Psoas muscle (tissue), 8 donors: ENCODE measurements at regions of chr4 and their contacts with region 1.

Region 1: DNA sequence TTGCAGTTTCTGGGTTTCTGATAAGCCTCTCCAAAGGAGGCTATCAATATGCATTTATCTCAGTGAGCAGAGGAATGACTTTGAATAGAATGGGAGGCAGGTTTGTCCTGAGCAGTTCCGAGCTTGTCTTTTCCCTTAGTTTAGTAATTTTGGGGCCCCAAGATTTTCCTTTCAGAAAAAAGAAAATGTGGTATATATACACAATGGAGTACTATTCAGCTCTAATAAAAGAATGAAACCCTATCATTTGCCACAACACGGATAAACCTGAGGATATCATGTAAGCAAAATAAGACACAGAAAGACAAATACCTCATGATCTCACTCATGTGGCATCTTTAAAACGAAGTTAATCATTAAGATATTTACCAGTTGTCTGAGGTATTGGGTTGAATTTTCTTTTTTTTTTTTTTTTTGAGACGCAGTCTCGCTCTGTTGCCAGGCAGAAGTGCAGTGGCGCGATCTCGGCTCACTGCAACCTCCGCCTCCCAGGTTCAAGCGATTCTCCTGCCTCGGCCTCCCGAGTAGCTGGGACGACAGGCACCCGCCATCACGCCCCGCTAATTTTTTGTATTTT is 540 bp downstream of the ZNF721 start:
- DNase-seq: no peak
- ATAC-seq: peak; percentile 18 to 55 (median 22)
- H3K4me3 ChIP-seq: peak overlapping the region; percentile 100
- H3K27ac ChIP-seq: peak overlapping the region; percentile 97
- H3K4me1 ChIP-seq: peaks cover 9% of the 10 kb centered on the region
- H3K27me3 ChIP-seq: no peaks in the 10 kb centered on the region
- CTCF ChIP-seq: no peak

Region 2: DNA sequence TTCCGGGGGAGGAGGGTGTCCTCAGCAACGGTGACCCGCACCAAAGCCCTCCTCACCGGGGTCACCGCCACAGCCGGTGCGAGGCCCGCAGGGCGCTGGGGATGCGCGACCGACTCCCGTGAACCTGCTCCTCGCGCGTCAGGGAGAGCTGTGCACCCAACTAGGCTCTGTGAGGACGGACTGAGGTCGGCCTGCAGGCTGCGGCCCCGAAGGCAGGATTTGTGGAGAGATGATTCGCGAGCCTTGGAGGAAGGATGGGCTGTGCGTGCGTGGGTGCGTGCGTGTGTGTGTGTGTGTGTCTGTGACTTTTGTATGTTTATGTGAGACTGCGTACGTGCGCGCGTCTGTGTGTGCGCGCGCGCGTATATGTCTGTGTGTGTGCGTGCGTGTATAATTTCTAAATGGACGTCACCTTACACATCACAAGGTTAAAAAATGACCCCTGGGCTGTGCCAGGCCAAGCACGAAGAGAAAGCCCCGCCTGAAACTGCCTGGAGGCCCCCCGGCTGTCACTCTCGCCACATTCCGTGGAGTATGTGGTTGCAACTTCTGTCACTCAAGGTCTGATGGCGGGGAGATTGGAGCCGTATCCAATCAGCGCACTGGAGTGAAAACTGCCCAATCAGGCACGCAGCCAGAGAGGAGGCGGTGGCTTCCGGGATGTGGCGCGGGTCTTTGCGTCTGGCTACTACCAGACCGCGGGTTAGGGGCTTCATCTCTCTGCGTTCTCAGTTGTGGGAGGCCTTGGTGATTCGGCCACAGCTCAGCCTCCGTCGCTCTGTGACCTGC is 161.1 kb before region 1 on chr4 and contains the start of gene ZNF141:
- intact Hi-C with region 1: no loop called
- DNase-seq: peak; percentile 95
- ATAC-seq: peak; percentile 98 to 99 (median 98)
- H3K4me3 ChIP-seq: peak within 1 kb of the TSS; percentile 77
- H3K27ac ChIP-seq: peak within 1 kb of the TSS; percentile 75
- H3K4me1 ChIP-seq: peaks cover 9% of the 10 kb centered on the region
- H3K27me3 ChIP-seq: no peaks in the 10 kb centered on the region
- CTCF ChIP-seq: no peak
- total RNA-seq, gene ZNF141: 2.9 to 4.8 (median 3.4) TPM

Region 3: GRCh38 chr4:473570-474457 is 24.6 kb before region 1 on chr4:
- intact Hi-C with region 1: loop called in 1 of 2 experiments (anchors 2 kb)
- DNase-seq: peak; percentile 93 to 95
- ATAC-seq: peak; percentile 99 to 100 (median 100)
- H3K4me3 ChIP-seq: peak overlapping the region; percentile 96
- H3K27ac ChIP-seq: peak overlapping the region; percentile 92
- H3K4me1 ChIP-seq: peaks cover 6% of the 10 kb centered on the region
- H3K27me3 ChIP-seq: no peaks in the 10 kb centered on the region
- CTCF ChIP-seq: no peak

Region 4: GRCh38 chr4:602559-602942 is 104.1 kb after region 1 on chr4:
- intact Hi-C with region 1: no loop called
- DNase-seq: no peak
- ATAC-seq: no peak
- H3K4me3 ChIP-seq: no peak overlapping the region
- H3K27ac ChIP-seq: no peak overlapping the region
- H3K4me1 ChIP-seq: no peaks in the 10 kb centered on the region
- H3K27me3 ChIP-seq: peaks cover 0 to 8% (median 2%) of the 10 kb centered on the region in 3 donors
- CTCF ChIP-seq: peak; percentile 13

Region 5: DNA sequence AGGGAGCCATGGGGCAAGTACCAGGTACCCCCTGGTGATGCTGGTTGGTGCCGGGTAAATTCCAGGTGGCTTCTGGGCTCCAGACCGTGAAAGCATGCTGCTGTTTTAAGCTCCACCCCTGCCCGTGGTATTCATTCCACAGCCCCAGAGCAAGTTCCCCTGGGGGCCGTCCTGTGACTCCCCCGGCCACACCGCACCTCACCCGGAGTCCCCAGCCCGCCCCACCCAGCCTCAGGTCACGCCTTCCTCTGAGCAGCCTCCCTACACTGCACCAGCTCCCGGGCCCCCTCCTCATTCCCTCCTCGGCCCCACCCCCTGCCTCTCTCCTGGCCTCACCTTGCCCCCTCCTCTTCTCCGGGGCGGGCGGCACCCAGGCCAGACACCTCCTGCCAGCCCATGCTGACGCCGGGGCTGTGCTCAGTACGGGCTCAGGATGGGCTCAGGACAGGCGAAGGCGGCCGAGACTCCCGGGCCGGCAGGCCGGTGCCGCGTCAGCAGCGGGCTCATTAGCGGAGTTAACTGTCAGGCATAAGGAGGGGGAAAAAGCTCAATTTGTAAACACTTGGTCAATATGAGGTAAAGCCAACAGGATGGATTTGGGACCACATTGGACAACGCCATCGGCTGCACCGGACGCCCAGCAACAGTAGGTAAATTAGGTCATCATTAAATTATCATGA is 1058.3 kb after region 1 on chr4:
- intact Hi-C with region 1: no loop called
- DNase-seq: no peak
- ATAC-seq: no peak
- H3K4me3 ChIP-seq: no peak overlapping the region
- H3K27ac ChIP-seq: no peak overlapping the region
- H3K4me1 ChIP-seq: no peaks in the 10 kb centered on the region
- H3K27me3 ChIP-seq: peaks cover 0 to 67% (median 30%) of the 10 kb centered on the region in 3 donors
- CTCF ChIP-seq: no peak